IMR-90 (cell line): ENCODE measurements at regions of chr2 and their contacts with region 1.

Region 1: DNA sequence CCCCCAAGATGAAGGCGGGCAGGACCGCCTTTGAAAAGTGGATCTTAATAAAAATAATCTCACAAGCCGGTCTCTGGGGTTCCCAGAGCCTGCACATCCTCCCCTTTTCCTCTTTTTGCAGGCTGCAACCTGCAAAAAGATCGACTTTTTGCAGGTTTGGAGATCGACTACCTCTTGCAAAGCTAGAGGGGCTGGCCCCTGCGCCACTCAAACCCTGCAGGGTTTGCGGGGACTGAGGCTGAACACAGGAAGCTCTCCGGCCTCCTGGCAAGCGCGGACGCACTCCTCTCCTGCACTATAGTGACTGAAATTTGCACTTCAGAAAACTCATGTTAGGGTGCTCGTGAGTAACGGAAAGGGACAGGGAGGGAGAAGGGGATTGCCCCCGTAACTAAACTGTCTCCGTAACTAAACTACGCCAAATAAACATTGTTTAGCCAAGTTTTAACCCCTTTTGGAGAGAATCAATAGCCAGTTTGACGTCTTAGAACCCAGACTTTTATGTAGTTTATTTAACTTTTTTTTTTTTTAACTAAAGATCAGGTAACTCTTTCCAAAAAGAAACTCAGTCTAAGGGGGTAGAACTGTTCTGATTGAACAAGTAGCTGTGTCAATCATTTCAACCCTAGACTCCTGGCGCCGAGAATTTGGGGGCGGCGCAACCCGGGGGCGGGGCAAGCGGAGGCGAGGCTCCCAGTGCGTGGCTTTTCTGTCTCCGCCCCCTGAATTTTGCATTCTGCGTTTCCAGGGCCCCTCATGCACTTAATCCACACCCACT is 2.5 kb downstream of the IGFBP5 start:
- DNase-seq: peak; percentile 81
- ATAC-seq: peak; percentile 14
- H3K4me3 ChIP-seq: peak overlapping the region; percentile 69
- H3K27ac ChIP-seq: peak overlapping the region; percentile 85
- H3K4me1 ChIP-seq: peaks cover 16% of the 10 kb centered on the region
- H3K27me3 ChIP-seq: no peaks in the 10 kb centered on the region
- CTCF ChIP-seq: no peak
- POLR2A ChIP-seq: peak; percentile 12; the same call in 1 of the 2 replicates
- RAD21 ChIP-seq: no peak

Region 2: DNA sequence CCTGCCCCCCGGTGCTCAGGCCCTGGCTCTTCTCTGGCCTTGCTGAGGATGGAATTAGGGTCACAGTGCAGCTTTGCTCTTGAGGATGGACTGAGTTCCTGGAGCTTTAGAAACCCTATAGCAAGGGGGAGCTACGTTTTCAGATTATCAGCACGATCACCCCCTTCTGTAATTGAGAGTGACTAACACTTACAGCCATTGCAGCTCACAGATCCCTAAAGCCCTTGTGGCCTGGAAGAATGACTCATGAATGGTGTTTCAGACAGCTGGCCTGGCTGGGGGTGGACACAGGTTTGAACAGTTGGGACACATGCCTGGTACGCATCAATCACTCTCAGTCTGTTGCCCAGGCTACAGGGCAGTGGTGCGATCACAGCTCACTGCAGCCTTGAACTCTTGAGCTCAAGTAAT is 82.2 kb after region 1 on chr2:
- CTCF ChIA-PET with region 1: interaction called, 8 read pairs
- POLR2A ChIA-PET with region 1: interaction called, 10 read pairs
- dilution Hi-C with region 1: no loop called
- in situ Hi-C with region 1: no loop called
- intact Hi-C with region 1: loop called (anchors 2 kb)
- DNase-seq: peak; percentile 99
- ATAC-seq: peak; percentile 91
- H3K4me3 ChIP-seq: no peak overlapping the region
- H3K27ac ChIP-seq: peak overlapping the region; percentile 66
- H3K4me1 ChIP-seq: peaks cover 11% of the 10 kb centered on the region
- H3K27me3 ChIP-seq: no peaks in the 10 kb centered on the region
- CTCF ChIP-seq: peak; percentile 20; the same call in 1 of the 2 replicates
- POLR2A ChIP-seq: no peak
- RAD21 ChIP-seq: 0 out of 2 replicates have a peak, but pooled peaks have one; percentile 32

Region 3: GRCh38 chr2:217153510-217153909 is 460.7 kb after region 1 on chr2:
- CTCF ChIA-PET with region 1: no interaction called
- POLR2A ChIA-PET with region 1: interaction called, 16 read pairs
- dilution Hi-C with region 1: loop called (anchors 25 kb)
- in situ Hi-C with region 1: no loop called
- intact Hi-C with region 1: no loop called
- DNase-seq: no peak
- ATAC-seq: no peak
- H3K4me3 ChIP-seq: no peak overlapping the region
- H3K27ac ChIP-seq: peak overlapping the region; percentile 39; the same call in 1 of the 2 replicates
- H3K4me1 ChIP-seq: peaks cover 18% of the 10 kb centered on the region
- H3K27me3 ChIP-seq: no peaks in the 10 kb centered on the region
- CTCF ChIP-seq: no peak
- POLR2A ChIP-seq: no peak
- RAD21 ChIP-seq: no peak

Region 4: GRCh38 chr2:217231212-217231611 is 538.4 kb after region 1 on chr2:
- CTCF ChIA-PET with region 1: no interaction called
- POLR2A ChIA-PET with region 1: interaction called, 13 read pairs
- dilution Hi-C with region 1: no loop called
- in situ Hi-C with region 1: no loop called
- intact Hi-C with region 1: no loop called
- DNase-seq: peak; percentile 63
- ATAC-seq: peak; percentile 63
- H3K4me3 ChIP-seq: no peak overlapping the region
- H3K27ac ChIP-seq: peak overlapping the region; percentile 93
- H3K4me1 ChIP-seq: peaks cover 12% of the 10 kb centered on the region
- H3K27me3 ChIP-seq: no peaks in the 10 kb centered on the region
- CTCF ChIP-seq: no peak
- POLR2A ChIP-seq: no peak
- RAD21 ChIP-seq: no peak

Region 5: DNA sequence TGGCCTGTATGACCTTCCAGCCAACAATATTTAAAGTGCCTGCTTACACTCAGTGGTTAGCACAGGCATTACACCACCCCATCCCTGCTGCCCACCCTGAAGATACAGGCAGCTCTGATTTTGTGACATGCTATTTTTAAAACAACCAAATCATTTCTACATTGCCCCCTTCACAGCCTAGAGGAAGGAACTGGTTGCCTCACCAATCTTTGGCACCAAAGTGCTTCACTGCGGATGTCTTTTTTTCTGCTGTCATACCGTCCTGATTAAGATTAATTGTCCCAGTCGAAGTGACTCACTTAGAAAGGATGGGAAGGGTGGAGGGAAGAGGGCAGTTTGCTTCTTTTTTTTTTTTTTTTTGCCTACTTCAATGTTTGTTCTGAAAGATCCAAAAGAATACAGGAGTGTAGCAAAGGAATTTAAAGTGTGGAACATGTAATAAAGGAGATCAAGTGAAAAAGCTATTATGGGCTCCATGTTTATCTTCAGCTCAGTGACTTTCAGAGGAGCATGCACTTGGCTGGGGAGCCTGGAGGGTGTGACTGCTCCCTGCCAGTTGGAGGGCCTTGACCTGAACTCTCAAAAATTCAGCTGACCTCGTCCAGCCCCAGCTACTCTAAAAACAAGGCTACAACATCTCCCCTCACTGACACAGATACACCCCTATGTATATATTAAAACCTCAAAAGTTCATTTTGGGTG is 668.1 kb after region 1 on chr2:
- CTCF ChIA-PET with region 1: no interaction called
- POLR2A ChIA-PET with region 1: interaction called, 13 read pairs
- dilution Hi-C with region 1: no loop called
- in situ Hi-C with region 1: no loop called
- intact Hi-C with region 1: loop called (anchors 10 kb)
- DNase-seq: peak; percentile 89
- ATAC-seq: peak; percentile 71
- H3K4me3 ChIP-seq: no peak overlapping the region
- H3K27ac ChIP-seq: peak overlapping the region; percentile 96
- H3K4me1 ChIP-seq: peaks cover 37% of the 10 kb centered on the region
- H3K27me3 ChIP-seq: no peaks in the 10 kb centered on the region
- CTCF ChIP-seq: peak; percentile 5; the same call in 1 of the 2 replicates
- POLR2A ChIP-seq: no peak
- RAD21 ChIP-seq: no peak

Region 6: GRCh38 chr2:217622205-217623060 is 929.6 kb after region 1 on chr2:
- CTCF ChIA-PET with region 1: no interaction called
- POLR2A ChIA-PET with region 1: interaction called, 16 read pairs
- dilution Hi-C with region 1: no loop called
- in situ Hi-C with region 1: no loop called
- intact Hi-C with region 1: loop called (anchors 10 kb)
- DNase-seq: peak; percentile 98
- ATAC-seq: peak; percentile 90
- H3K4me3 ChIP-seq: no peak overlapping the region
- H3K27ac ChIP-seq: peak overlapping the region; percentile 68
- H3K4me1 ChIP-seq: peaks cover 27% of the 10 kb centered on the region
- H3K27me3 ChIP-seq: no peaks in the 10 kb centered on the region
- CTCF ChIP-seq: no peak
- POLR2A ChIP-seq: no peak
- RAD21 ChIP-seq: no peak